Activated T-helper 2 cell treated with anti-CD3 and anti-CD28 coated beads, Interferon-gamma antibody, Interleukin-2, Interleukin-4, amounts not matched to agents 10 μg/mL and 5 μg/mL and 100 μg/mL, durations not matched to agents 14 hours and 24 hours and 36 hours (primary cell): ENCODE measurements at regions of chr6 and their contacts with region 1.

Region 1: GRCh38 chr6:15121443-15121842 is 124.4 kb upstream of the JARID2 start:
- DNase-seq: no peak
- H3K4me3 Mint-ChIP-seq: no peak overlapping the region
- H3K27ac Mint-ChIP-seq: peak overlapping the region; percentile 15
- H3K4me1 Mint-ChIP-seq: peaks cover 14% of the 10 kb centered on the region
- H3K27me3 Mint-ChIP-seq: no peaks in the 10 kb centered on the region

Region 2: GRCh38 chr6:15073344-15073789 is 48.1 kb before region 1 on chr6:
- intact Hi-C with region 1: loop called (anchors 1 kb)
- DNase-seq: no peak
- H3K4me3 Mint-ChIP-seq: no peak overlapping the region
- H3K27ac Mint-ChIP-seq: no peak overlapping the region
- H3K4me1 Mint-ChIP-seq: peaks cover 10% of the 10 kb centered on the region
- H3K27me3 Mint-ChIP-seq: no peaks in the 10 kb centered on the region

Region 3: GRCh38 chr6:15299430-15300131 is 178.1 kb after region 1 on chr6:
- intact Hi-C with region 1: no loop called
- DNase-seq: peak; percentile 46
- H3K4me3 Mint-ChIP-seq: peak overlapping the region; percentile 53
- H3K27ac Mint-ChIP-seq: peak overlapping the region; percentile 68
- H3K4me1 Mint-ChIP-seq: peaks cover 74% of the 10 kb centered on the region
- H3K27me3 Mint-ChIP-seq: no peaks in the 10 kb centered on the region

Region 4: DNA sequence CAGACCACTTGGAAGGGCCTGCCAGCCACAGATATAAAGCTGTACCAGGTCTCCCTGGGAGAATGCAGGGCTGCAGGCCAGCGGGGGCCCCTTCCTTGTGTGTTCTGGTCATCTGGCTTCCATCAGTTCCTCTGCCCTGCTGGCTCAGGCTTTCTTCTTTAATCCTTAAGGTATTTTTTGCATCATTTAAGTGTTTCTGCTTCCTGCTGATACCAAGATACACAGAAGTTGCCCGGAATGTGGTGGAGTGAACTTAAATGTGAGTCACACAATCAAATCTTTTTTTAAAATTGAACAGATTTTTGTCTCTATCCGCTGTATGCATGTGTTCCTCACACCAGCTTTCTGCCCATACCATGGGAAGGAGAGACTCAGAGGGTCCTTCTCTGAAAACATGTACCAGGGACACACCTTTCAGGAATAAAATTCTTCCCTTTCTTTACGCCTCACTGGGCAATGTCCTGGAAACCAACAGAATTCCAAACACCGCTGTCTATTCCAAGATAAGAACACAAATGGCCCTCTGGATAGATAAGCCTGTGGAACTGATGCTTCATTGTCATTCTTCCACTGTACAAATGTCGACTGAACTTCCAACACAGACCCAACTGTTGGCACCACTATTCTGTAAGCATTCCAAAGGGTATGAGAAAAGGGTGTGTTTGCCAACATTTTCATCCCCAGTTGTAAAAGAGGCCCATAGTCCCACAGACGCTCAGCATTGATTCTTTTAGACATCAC is 801.2 kb after region 1 on chr6:
- intact Hi-C with region 1: no loop called
- DNase-seq: no peak
- H3K4me3 Mint-ChIP-seq: no peak overlapping the region
- H3K27ac Mint-ChIP-seq: no peak overlapping the region
- H3K4me1 Mint-ChIP-seq: peaks cover 6% of the 10 kb centered on the region
- H3K27me3 Mint-ChIP-seq: no peaks in the 10 kb centered on the region